HepG2 (cell line): ENCODE measurements at regions of chr2 and their contacts with region 1.

Region 1: DNA sequence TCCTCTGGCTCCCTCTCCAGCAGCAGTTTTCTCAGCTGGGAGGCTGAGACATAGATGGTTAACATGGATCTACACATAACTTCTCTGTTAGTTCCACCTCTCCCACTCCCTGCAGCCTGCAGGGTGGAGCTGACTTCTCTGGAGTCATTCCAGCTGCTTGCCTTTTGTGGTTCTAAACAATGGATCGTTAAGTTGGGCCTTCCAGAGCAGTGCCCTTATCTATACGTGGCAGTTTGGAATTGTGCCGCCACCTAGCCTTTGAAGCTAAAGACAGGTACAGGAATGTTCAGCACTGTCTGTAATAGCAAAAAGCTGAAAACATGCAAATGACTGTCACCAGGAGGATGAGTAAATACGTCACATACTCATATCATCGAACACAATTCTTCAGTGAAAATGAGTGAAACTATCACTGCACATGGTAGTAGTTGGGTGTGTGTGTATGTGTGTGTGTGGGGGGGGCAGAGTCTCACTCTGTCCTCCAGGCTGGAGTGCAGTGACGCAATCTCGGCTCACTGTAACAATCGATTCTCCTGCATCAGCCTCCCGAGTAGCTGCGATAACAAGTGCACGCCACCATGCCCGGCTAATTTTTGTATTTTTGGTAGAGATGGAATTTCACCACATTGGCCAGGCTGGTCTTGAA is 50.3 kb downstream of the SH2D6 start:
- DNase-seq: peak; percentile 97
- ATAC-seq: peak; percentile 80
- H3K4me3 ChIP-seq: peak overlapping the region in 2 of 3 experiments; percentile 29 to 44; a peak in 4 of 6 replicates
- H3K27ac ChIP-seq: peak overlapping the region; percentile 70
- H3K4me1 ChIP-seq: peaks cover 67% of the 10 kb centered on the region
- H3K27me3 ChIP-seq: no peaks in the 10 kb centered on the region
- CTCF ChIP-seq: peak; percentile 53
- EP300 ChIP-seq: 0 out of 4 replicates have a peak, but pooled peaks of 1 of the 2 experiments have one; percentile 43
- POLR2A ChIP-seq: no peak
- RAD21 ChIP-seq: peak; percentile 24; the same call in 1 of the 2 replicates

Region 2: DNA sequence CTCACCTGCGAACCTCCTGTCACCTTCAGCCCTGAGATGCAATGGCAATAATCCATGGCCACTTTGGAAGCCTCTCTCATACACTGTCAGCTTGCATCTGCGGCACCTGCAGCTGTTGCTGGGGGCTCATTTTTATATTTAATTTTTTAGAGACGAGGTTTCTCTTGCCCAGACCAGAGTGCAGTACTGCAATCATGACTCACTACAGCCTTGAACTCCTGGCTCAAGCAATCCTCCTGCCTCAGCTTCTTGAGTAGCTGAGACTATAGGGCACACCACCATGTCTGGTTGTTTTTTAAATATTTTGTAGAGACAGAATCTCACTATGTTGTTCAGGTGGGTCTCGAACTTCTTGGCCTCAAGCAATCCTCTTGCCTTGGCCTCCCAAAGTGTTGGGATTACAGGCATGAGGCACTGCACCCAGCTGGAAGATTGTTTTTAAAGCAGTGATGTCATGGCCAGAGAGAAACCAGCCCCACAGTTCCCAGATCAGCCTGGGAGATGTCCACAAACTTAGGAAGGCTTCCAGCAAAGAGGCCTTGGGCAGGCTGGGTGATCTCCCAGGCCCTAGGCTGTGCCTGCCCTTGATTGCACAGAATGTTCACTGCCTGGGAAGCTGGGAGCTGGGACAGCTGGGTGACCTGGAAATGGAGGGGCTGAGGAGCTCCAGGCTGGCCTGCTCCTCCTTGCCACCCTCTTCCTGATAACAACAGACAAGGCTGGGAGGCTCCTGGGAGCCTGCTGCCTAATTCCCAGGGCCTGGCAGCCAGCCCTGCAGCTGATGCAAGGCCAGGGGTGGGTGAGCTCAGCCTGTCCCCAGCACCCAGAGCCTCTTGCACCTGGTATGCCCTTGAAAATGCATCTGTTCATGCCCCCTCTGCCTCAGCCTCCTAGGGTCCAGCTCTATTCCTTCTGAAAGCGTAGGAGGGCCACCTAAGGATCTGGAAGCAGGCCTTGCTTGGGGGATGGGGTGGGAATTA is 23.2 kb before region 1 on chr2:
- CTCF ChIA-PET with region 1: no interaction called
- POLR2A ChIA-PET with region 1: interaction called, 23 read pairs
- in situ Hi-C with region 1: no loop called
- intact Hi-C with region 1: no loop called
- DNase-seq: no peak
- ATAC-seq: peak; percentile 46
- H3K4me3 ChIP-seq: no peak overlapping the region
- H3K27ac ChIP-seq: no peak overlapping the region
- H3K4me1 ChIP-seq: peaks cover 32% of the 10 kb centered on the region
- H3K27me3 ChIP-seq: peaks cover 0 to 10% of the 10 kb centered on the region in 2 experiments; a peak in 1 of 5 replicates
- CTCF ChIP-seq: no peak
- EP300 ChIP-seq: no peak
- POLR2A ChIP-seq: no peak
- RAD21 ChIP-seq: no peak

Region 3: DNA sequence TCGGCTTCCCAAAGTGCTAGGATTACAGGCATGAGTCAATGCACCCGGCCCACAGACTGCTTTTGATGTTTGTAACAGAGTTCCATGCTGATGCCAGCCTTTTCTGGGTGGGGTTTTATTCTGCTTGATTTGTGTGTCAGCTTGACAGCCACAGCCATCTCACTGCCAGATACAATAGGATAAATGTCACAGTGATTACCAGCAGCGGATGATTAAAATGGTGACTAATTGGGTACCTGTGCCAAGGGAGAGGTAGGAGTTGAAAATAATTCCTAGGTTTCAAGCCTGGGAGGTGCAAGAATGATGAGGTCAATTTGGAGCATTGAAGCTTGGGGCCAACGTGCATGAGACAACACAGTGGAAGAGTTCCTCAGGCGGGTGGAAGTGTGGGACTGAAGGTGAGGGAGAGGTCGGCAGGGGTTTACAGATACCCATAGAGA is 10.9 kb before region 1 on chr2:
- CTCF ChIA-PET with region 1: no interaction called
- POLR2A ChIA-PET with region 1: interaction called, 21 read pairs
- in situ Hi-C with region 1: no loop called
- intact Hi-C with region 1: no loop called
- DNase-seq: no peak
- ATAC-seq: no peak
- H3K4me3 ChIP-seq: no peak overlapping the region
- H3K27ac ChIP-seq: no peak overlapping the region
- H3K4me1 ChIP-seq: peaks cover 52% of the 10 kb centered on the region
- H3K27me3 ChIP-seq: peaks cover 3 to 20% of the 10 kb centered on the region in 2 experiments; a peak in 4 of 5 replicates
- CTCF ChIP-seq: no peak
- EP300 ChIP-seq: no peak
- POLR2A ChIP-seq: no peak
- RAD21 ChIP-seq: no peak

Region 4: DNA sequence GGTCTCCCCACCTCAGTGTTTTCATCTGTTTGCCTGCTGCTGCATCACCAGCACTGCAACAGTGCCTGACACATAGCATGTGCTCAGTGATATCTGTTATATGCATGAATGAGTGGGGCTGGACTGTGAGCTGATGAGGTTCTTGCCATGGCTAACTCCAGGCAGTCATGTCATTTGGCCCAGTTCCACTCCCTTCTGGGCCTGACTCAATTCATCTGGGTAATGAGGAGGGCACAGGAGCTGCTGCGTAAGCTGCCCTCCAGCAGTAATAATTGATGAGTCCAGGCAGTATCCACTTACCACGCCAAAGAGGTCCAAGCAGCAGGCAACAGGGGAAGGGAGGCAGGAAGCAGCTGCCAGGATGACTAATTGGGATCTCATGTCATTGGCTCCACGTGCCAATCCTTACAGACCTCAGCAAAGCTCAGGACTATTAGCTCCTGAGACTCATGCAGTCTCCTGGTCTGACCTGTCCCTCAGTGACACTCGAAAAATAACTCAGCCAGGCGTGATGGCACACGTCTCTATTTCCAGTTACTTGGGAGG is 36.0 kb after region 1 on chr2:
- CTCF ChIA-PET with region 1: no interaction called
- POLR2A ChIA-PET with region 1: interaction called, 6 read pairs
- in situ Hi-C with region 1: no loop called
- intact Hi-C with region 1: loop called (anchors 5 kb)
- DNase-seq: no peak
- ATAC-seq: no peak
- H3K4me3 ChIP-seq: no peak overlapping the region
- H3K27ac ChIP-seq: no peak overlapping the region
- H3K4me1 ChIP-seq: peaks cover 53% of the 10 kb centered on the region
- H3K27me3 ChIP-seq: 0 out of 5 replicates have a peak, but pooled peaks cover 0 to 5% of the 10 kb centered on the region in 2 experiments
- CTCF ChIP-seq: no peak
- EP300 ChIP-seq: no peak
- POLR2A ChIP-seq: no peak
- RAD21 ChIP-seq: no peak